ENCODE measurements at regions of chr3 and their contacts with region 1.

Region 1: DNA sequence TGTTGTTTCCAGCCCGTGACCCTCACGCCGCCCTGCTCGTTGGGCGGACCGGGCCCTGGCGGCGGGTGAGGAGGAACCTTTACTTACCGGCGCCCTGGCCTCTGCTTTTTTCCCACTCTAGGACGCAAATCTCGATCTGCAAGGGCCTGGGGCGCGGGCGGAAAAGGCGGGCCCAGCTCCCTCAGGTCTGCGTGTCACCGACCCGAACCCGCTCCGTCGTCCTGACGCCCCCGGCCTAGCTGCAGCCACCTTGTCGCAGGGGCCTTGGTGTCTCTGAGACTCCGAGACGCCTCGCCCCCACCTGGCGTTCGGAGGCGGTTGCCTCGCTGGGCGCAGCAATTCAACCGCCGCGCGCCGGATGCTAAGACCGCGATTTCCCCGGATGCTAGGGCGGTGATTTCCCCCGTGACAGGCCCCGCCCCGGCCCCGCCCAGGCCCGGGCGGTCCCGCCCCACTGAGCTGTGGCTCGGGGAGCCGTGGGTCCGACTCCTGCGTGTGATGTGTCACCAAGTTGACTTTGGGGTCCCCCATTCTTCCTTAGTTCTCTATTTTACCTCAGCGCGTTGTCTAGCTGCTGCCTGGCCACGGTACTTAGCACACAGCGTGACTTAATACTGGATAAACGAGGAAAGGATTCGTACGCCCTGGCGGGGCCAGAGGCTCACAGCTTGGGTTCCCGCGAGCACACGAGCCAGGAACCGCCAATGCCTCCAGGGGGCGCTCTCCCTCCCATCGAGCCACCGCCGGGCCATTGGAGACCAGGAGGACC is at the start of gene RPL39L:
- DNase-seq: peak; percentile 95
- CTCF ChIP-seq: peak; percentile 79

Region 2: DNA sequence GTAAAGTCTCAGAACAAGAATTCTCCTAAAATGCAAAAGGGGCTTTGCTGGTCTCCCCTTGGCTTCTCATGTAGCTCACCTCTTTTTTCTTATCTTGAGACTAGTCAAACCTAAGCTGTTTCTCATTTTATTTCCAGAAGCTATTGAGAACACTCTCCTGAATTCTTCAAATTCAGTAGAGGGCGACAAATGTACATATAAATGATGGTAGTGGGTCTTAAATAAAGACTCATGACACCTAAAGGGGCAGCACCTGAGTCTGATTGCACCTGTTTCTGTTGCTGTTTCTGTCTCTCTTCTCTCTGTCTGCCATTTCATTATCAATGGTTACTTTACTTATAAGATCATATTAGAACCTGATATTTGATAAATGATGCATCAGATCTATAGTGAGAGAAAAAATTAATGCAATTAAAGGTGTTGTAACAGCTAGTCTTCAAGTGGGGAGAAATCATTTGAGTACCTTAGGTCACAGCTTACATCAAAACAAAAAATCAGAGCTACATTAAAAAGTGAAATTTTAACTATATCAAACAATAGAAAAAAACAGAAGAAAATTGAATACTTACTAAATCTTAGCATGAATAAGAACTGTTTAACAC is 289.8 kb before region 1 on chr3:
- CTCF ChIA-PET with region 1: interaction called, 12 read pairs
- POLR2A ChIA-PET with region 1: no interaction called
- DNase-seq: peak; percentile 69
- CTCF ChIP-seq: peak; percentile 61

Region 3: GRCh38 chr3:187022403-187023029 is 116.8 kb before region 1 on chr3:
- CTCF ChIA-PET with region 1: no interaction called
- POLR2A ChIA-PET with region 1: no interaction called
- DNase-seq: no peak
- CTCF ChIP-seq: no peak

Region 4: DNA sequence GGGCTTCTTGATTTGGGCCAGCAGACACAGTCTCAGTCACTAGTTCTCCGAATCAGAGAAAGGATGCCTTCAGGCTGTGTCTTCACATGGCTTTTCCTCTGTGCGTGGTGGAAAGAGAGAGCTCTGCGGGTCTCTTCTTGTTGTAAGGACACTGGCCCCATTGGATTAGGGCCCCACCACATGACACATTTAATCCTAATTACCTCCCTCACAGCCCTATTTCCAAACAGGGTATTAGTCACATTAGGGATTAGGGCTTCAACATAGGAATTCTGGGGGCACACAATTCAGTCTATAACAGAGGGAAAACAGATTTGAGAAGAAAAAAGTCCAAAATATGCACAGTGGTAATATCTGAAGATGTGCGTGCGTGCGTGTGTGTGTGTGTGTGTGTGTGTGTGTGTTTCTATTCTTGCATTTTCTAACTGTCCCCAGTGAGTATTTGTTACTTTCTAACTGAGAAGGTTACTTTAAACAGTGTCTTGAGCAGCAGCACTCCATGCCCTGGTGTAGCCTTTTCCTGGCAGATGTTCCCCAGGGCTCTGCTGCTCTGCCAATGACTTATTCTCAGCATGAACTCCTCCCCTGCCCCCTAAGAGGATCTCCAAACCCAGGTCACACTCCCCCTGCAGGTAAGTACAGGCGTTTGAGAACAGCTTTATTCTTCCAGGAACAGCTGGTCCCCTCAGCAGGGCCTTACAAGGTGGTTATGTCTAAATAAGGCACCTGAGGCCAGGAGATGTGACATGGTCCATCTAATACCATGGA is 72.9 kb before region 1 on chr3:
- CTCF ChIA-PET with region 1: interaction called, 10 read pairs
- POLR2A ChIA-PET with region 1: no interaction called
- DNase-seq: peak; percentile 51
- CTCF ChIP-seq: peak; percentile 34

Region 5: DNA sequence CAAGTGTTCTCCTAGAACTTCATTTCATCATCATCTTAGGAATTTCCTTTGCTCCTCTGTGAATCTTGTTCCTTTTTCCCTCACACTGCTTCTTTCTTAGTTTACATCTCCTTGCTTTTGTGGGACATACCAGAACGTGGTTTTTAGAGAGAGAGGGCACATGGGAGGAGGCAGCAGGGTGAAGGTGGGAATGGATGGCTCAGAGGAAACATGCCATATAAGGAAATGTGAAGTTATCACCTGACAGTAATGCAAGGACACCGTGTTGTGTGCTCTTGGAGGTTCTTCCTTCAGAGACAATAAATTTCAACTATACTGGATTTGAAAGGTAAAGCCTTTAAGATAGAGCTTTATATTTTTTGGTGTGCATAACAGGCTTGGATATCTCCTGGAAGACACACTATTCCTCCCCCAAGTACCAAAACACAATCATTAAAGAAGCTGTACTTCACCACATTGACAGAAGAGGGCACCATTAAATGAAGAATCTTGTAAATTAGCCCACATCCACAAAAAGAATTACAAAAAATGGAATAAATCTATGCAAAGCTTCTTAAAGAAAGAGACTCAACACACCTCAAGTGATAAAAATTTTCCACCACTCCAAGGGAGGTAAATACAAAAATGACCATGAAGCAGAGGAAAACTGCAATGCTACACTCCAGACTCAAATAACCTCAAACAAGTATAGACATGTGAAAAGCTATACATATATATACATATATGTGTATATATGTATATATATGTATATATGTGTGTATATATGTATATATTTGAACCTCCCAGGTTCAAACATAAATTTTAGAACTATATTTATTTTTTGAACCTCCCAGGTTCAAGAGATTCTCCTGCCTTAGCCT is 26.1 kb before region 1 on chr3:
- CTCF ChIA-PET with region 1: interaction called, 78 read pairs
- POLR2A ChIA-PET with region 1: interaction called, 3 read pairs
- DNase-seq: peak; percentile 24
- CTCF ChIP-seq: peak; percentile 57

Region 6: GRCh38 chr3:187125319-187126031 is 13.8 kb before region 1 on chr3:
- CTCF ChIA-PET with region 1: interaction called, 24 read pairs
- POLR2A ChIA-PET with region 1: no interaction called
- DNase-seq: peak; percentile 14
- CTCF ChIP-seq: no peak

Region 7: DNA sequence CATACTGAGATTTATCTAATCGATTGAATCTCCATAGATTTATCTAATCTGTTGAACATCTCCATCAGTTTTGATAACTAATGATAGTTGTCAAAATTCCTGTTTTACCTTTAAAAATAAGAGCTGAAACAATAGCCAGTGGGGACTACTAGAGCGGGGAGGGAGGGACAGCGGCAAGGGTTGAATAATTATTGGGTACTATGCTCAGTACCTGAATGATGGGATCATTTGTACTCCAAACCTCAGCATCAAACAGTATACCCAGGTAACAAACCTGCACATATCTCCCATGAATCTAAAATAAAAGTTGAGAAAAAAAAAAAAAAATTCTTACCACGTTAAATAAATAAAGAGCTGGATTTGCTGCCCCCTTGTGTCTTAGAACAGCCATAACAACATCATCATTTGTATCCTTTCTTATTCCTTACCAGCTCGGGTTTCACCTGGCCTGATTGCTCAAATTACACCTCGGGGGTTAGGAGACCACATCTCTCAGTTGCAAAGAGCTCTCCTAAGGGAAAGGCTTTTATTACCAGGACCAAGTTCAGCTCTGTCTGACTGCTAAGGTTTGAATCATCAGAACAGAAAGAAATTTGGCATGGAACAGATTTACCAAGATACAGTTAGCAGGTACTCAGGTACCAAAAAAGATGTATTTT is 25.7 kb after region 1 on chr3:
- CTCF ChIA-PET with region 1: interaction called, 15 read pairs
- POLR2A ChIA-PET with region 1: no interaction called
- DNase-seq: peak; percentile 51
- CTCF ChIP-seq: peak; percentile 47

Region 8: DNA sequence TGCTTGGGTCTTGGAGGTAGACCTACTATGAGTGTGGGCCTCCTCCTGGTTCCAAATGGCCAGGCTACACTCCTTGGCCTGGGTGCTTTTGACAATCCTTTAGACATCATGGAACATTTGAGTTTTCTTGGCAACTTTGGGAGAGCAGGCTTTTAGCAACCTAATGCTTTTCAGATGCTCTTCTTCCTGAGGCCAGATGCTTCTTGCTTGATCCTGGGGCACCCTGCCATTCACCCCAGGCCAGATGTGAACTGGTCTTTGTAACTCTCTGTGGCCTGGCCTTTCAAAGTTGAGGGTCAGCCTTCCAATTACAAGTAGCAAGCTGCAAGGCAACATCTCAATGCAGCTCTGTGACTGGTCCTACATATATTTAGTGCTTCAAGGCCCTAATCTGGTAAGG is 98.4 kb after region 1 on chr3:
- CTCF ChIA-PET with region 1: no interaction called
- POLR2A ChIA-PET with region 1: no interaction called
- DNase-seq: no peak
- CTCF ChIP-seq: no peak

Region 9: DNA sequence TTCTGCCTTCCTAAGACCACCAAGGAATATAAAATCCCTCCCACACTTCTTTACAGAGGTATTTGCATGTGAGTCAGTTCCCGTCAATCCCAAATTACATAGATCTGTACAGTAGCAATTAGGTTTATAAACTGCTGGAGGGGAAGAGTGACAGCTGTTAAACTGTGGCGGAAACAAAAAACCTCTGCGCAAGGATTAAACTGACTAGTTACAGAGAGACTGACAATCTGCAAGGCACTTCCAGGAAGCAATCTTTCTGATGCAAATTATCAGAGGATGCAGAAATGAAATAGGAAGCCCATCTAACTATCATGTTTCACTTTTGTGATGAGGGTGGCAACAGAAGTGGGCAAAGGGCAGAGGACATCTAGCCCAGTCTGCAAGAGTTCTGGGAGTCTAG is 379.3 kb after region 1 on chr3:
- CTCF ChIA-PET with region 1: no interaction called
- POLR2A ChIA-PET with region 1: no interaction called
- DNase-seq: no peak
- CTCF ChIP-seq: no peak